Caco-2 (cell line): ENCODE measurements at regions of chr17 and their contacts with region 1.

Region 1: DNA sequence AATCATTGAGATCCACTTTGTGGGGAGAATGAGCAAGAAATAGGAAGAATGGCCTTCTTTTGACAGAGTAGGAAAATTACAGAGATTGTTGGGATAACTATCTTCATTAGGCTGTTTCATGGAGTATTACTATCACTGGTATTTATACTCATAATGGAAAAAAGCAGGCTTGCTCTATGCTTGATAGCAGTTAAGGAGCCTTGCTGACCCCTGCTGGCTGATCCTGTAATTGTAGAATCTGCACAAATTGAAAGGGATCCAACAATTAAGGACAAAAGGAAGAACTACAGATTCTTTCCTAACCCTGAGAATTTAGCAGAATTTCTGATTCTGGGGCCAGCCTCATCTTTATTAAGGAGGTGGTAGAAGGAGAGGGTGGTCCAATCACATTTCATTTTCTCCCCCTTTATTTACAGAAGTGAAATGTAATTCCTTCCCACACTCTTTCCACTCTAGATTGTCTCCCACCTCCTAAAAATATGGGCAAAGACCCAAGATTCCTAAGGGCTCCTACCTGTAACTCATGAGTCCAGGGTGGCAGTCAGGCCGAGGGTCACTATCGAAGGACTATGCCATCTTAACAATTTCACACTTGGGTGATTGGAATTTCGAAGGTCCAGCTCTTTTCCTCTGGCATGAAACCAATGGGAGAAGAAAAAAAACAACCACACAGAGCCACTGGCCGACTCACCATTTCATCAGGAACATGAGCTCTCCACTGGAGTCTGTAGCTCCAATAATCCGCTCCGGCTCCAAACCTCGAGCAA is 26.3 kb downstream of the NFE2L1 start:
- DNase-seq: peak; percentile 89 to 92
- H3K4me3 ChIP-seq: no peak overlapping the region
- H3K4me3 Mint-ChIP-seq: no peak overlapping the region
- H3K27ac Mint-ChIP-seq: no peak overlapping the region
- H3K4me1 ChIP-seq: no peaks in the 10 kb centered on the region
- H3K4me1 Mint-ChIP-seq: no peaks in the 10 kb centered on the region
- H3K27me3 ChIP-seq: no peaks in the 10 kb centered on the region
- H3K27me3 Mint-ChIP-seq: no peaks in the 10 kb centered on the region
- CTCF ChIP-seq: peak; percentile 97 to 98

Region 2: GRCh38 chr17:47604598-47604927 is 469.9 kb before region 1 on chr17:
- CTCF ChIA-PET with region 1: no interaction called
- POLR2A ChIA-PET with region 1: no interaction called
- intact Hi-C with region 1: no loop called
- DNase-seq: no peak
- H3K4me3 ChIP-seq: no peak overlapping the region
- H3K4me3 Mint-ChIP-seq: no peak overlapping the region
- H3K27ac Mint-ChIP-seq: no peak overlapping the region
- H3K4me1 ChIP-seq: no peaks in the 10 kb centered on the region; the same call in 1 of the 2 replicates
- H3K4me1 Mint-ChIP-seq: peaks cover 6% of the 10 kb centered on the region
- H3K27me3 ChIP-seq: no peaks in the 10 kb centered on the region
- H3K27me3 Mint-ChIP-seq: no peaks in the 10 kb centered on the region
- CTCF ChIP-seq: no peak

Region 3: GRCh38 chr17:48101012-48101720 is 26.7 kb after region 1 on chr17 and contains the start of gene CBX1:
- CTCF ChIA-PET with region 1: interaction called, 12 read pairs
- POLR2A ChIA-PET with region 1: no interaction called
- intact Hi-C with region 1: no loop called
- DNase-seq: peak; percentile 99 to 100
- H3K4me3 ChIP-seq: peak within 1 kb of the TSS; percentile 83
- H3K4me3 Mint-ChIP-seq: peak within 1 kb of the TSS; percentile 93
- H3K27ac Mint-ChIP-seq: peak within 1 kb of the TSS; percentile 79
- H3K4me1 ChIP-seq: peaks cover 8% of the 10 kb centered on the region
- H3K4me1 Mint-ChIP-seq: peaks cover 7% of the 10 kb centered on the region
- H3K27me3 ChIP-seq: no peaks in the 10 kb centered on the region
- H3K27me3 Mint-ChIP-seq: no peaks in the 10 kb centered on the region
- CTCF ChIP-seq: no peak
- total RNA-seq, gene CBX1: 213 and 214 TPM in 2 replicates